RWPE1 (cell line): ENCODE measurements at regions of chr9 and their contacts with region 1.

Region 1: GRCh38 chr9:124839612-124840299 is 13.5 kb upstream of the WDR38 start:
- DNase-seq: no peak
- H3K27ac ChIP-seq: peak overlapping the region; percentile 22
- CTCF ChIP-seq: no peak; the same call in 1 of the 2 replicates

Region 2: DNA sequence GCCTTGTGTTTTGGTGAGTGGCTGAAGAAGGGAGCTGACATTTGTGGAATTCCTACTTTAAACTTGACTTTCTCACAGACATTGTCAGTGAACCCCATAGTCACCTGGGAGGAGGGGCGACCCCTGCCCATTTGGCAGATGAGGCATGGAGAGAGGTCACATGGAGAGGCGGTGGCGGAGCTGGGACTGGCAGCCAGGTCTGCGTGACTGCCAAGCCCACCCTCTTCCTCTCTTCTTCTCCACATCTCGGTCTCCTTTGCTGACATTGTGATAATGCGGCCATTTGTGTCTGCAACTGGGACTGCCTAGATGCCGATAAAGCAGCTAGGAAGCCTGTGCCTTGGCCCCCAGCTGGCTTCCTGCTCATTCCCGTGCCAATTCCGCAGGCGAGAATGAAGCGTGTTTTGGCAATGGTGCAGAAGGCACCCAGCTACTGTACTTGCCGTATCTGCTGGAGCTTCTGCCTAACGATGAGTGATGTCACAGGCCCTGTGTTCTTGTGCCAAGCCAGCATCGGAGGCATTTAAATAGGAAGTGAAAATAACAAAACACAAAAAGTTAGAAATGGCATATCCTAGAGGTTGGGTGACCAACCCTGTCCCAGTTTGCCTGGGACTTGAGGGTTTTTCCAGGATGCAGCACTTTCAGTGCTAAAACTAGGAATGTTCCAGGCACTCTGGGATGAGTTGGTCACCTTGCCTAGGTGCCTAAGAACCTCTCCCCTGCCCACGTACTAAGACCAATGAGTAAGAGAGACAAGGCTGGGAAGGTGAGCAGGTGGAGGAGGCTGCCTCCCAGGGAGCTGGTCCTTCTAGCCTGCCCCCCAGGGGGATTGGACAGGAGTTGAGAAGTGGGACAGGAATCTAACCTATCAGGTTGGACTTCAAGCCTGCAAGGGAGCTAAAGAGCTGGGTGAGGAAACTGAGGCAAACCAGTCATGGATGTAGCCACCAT is 39.2 kb before region 1 on chr9:
- CTCF ChIA-PET with region 1: interaction called, 12 read pairs
- POLR2A ChIA-PET with region 1: no interaction called
- DNase-seq: peak; percentile 52
- H3K27ac ChIP-seq: peak overlapping the region; percentile 73
- CTCF ChIP-seq: no peak